MCF 10A (cell line): ENCODE measurements at regions of chr14 and their contacts with region 1.

Region 1: GRCh38 chr14:55026793-55027561 is at the starts of genes SOCS4 and WDHD1:
- DNase-seq: peak; percentile 93
- H3K4me3 Mint-ChIP-seq: peak within 1 kb of the TSS; percentile 91
- H3K27ac Mint-ChIP-seq: peak within 1 kb of the TSS; percentile 88
- H3K4me1 Mint-ChIP-seq: peaks cover 20% of the 10 kb centered on the region
- H3K27me3 Mint-ChIP-seq: no peaks in the 10 kb centered on the region
- CTCF ChIP-seq: no peak
- total RNA-seq, gene SOCS4: 24.6 and 29.6 TPM in 2 replicates
- total RNA-seq, gene WDHD1: 5.8 and 6.5 TPM in 2 replicates

Region 2: DNA sequence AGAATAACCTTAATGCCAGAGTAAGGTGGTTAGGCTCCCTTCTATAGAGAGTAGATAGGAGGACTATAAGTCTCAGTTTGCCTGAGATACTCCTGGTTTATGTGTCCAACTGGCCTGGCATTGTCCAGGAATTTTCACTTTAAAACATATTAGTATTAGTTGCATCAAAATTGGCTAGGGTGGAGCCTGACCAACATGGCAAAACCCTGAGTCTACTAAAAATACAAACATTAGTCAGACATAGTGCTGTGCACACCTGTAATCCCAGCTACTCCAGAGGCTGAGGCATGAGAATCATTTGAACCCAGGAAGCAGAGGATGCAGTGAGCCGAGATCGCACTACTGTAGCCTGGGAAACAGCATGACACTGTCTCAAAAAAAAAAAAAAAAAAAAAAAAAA is 12.0 kb before region 1 on chr14:
- CTCF ChIA-PET with region 1: interaction called, 3 read pairs
- POLR2A ChIA-PET with region 1: interaction called, 15 read pairs
- intact Hi-C with region 1: no loop called
- DNase-seq: no peak
- H3K4me3 Mint-ChIP-seq: no peak overlapping the region
- H3K27ac Mint-ChIP-seq: no peak overlapping the region
- H3K4me1 Mint-ChIP-seq: peaks cover 5% of the 10 kb centered on the region
- H3K27me3 Mint-ChIP-seq: no peaks in the 10 kb centered on the region
- CTCF ChIP-seq: no peak

Region 3: DNA sequence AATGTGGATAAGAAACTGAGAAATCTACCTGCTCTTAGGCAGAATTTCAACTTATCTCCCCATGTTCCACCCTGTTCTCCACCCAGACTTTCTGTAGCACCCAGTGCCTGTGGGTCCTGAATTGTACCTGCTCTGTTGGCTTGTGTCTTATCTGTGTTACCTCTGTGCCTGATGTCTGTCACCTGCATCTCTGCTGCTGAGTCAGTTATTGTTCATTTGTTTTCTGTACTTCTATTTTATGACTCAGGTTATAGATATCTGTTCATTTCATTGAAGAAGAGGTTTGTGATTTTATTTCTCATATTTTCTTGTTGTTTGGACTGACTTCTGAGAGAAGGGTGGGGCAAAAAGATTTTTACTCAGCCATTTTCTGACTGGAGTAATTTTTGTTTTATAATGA is 11.7 kb after region 1 on chr14:
- CTCF ChIA-PET with region 1: interaction called, 5 read pairs
- POLR2A ChIA-PET with region 1: interaction called, 26 read pairs
- intact Hi-C with region 1: no loop called
- DNase-seq: no peak
- H3K4me3 Mint-ChIP-seq: no peak overlapping the region
- H3K27ac Mint-ChIP-seq: peak overlapping the region; percentile 59
- H3K4me1 Mint-ChIP-seq: peaks cover 15% of the 10 kb centered on the region
- H3K27me3 Mint-ChIP-seq: no peaks in the 10 kb centered on the region
- CTCF ChIP-seq: no peak

Region 4: DNA sequence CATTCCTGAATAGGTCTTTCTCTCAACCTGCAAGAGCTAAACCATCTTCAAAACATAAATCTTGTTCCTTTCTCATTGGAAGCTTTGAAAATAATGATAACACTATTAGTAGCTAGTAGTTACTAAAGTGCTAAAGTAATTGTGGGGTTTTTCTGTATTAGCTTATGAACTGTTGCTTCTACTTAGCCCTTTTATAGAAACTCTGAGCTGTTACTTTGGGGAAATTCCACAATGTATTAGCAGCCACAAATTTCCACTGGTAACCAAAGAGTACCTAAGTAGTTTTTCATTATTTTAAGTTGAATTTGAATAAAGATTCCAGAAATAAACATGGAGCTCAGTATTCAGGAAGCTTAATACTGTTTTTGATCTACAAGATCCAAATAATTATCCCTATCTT is 18.1 kb after region 1 on chr14:
- CTCF ChIA-PET with region 1: interaction called, 5 read pairs
- POLR2A ChIA-PET with region 1: interaction called, 12 read pairs
- intact Hi-C with region 1: no loop called
- DNase-seq: no peak
- H3K4me3 Mint-ChIP-seq: no peak overlapping the region
- H3K27ac Mint-ChIP-seq: no peak overlapping the region
- H3K4me1 Mint-ChIP-seq: no peaks in the 10 kb centered on the region
- H3K27me3 Mint-ChIP-seq: no peaks in the 10 kb centered on the region
- CTCF ChIP-seq: no peak

Region 5: GRCh38 chr14:55071870-55072640 is 45.1 kb after region 1 on chr14:
- CTCF ChIA-PET with region 1: no interaction called
- POLR2A ChIA-PET with region 1: interaction called, 60 read pairs
- intact Hi-C with region 1: no loop called
- DNase-seq: peak; percentile 81
- H3K4me3 Mint-ChIP-seq: peak overlapping the region; percentile 50
- H3K27ac Mint-ChIP-seq: peak overlapping the region; percentile 100
- H3K4me1 Mint-ChIP-seq: peaks cover 47% of the 10 kb centered on the region
- H3K27me3 Mint-ChIP-seq: no peaks in the 10 kb centered on the region
- CTCF ChIP-seq: no peak

Region 6: DNA sequence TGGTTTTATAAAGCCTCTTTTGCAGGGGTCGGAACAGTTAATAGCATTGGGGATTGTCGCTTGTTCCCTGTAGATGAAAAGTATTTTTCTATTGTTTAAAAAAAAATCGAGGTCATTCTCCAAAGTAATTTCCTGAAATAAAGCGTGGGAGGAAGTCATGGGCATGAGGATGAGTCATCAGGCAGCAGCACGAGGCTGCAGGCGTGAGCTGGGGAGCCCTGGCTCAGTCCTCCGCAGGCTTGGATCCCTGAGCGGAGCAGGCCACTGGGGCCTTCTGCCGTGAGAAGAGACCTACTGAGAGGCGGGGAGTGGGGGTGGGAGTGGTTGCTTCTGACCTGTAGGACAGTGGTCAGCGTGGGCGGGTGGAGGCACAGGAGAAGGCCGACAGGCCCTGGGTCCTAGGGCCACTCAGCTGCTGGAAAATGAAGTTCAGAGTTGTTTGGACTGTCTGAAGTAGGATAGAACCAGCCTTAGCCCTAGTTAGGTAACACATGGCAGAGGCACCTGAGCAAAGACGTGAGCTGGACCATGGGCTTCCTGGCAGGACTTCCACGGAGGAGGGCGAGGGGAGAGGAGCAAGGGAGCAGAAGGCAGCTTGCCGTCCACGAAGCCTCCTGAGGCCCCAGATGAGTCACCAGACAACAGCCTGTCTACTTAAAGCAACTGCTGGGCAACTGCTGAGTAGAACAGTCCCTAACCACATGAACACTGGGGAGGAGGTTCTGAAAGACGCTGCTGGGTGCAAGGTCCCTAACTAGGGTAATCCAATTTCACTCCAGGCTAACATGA is 81.0 kb after region 1 on chr14:
- CTCF ChIA-PET with region 1: no interaction called
- POLR2A ChIA-PET with region 1: interaction called, 20 read pairs
- intact Hi-C with region 1: no loop called
- DNase-seq: peak; percentile 95
- H3K4me3 Mint-ChIP-seq: peak overlapping the region; percentile 61
- H3K27ac Mint-ChIP-seq: peak overlapping the region; percentile 99
- H3K4me1 Mint-ChIP-seq: peaks cover 22% of the 10 kb centered on the region
- H3K27me3 Mint-ChIP-seq: no peaks in the 10 kb centered on the region
- CTCF ChIP-seq: no peak

Region 7: DNA sequence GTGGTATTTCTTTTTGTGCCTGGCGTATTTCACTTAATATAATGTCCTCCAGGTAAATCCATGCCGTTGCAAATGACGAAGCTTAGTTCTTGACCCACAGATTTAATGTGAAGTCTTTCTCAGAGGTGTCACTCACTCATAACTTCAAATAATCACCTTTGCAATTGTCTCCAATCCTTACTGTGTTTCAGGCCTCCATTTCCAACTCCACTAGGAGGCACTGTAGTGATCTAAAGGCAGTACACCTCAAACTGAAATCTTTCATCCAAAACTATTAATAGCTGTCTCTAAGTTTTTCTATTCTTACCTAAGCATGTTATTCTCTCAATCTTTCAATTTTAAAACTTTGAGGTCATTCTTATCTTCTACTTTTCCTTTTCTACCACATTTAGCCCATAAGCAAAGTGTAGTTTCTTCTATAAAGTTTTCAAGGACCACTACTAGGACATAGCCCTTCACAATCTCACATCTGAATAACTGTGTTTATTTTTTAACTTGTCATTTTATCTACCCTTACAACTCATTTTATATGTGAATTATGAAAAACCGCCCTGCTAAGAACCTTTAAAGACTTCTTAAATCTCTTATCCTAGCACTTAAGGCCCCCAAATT is 218.8 kb after region 1 on chr14:
- CTCF ChIA-PET with region 1: no interaction called
- POLR2A ChIA-PET with region 1: no interaction called
- intact Hi-C with region 1: no loop called
- DNase-seq: peak; percentile 49
- H3K4me3 Mint-ChIP-seq: no peak overlapping the region
- H3K27ac Mint-ChIP-seq: no peak overlapping the region
- H3K4me1 Mint-ChIP-seq: no peaks in the 10 kb centered on the region
- H3K27me3 Mint-ChIP-seq: peaks cover 43% of the 10 kb centered on the region
- CTCF ChIP-seq: peak; percentile 40